Activated T-helper 1 cell treated with anti-CD3 and anti-CD28 coated beads, Interleukin-12 subunit alpha, Interleukin-12 subunit beta, Interleukin-2, Interleukin-4 antibody, amounts not matched to agents 30 ng/mL and 10 ng/mL and 1 ng/mL, durations not matched to agents 14 hours and 24 hours and 36 hours (primary cell): ENCODE measurements at regions of chr1 and their contacts with region 1.

Region 1: DNA sequence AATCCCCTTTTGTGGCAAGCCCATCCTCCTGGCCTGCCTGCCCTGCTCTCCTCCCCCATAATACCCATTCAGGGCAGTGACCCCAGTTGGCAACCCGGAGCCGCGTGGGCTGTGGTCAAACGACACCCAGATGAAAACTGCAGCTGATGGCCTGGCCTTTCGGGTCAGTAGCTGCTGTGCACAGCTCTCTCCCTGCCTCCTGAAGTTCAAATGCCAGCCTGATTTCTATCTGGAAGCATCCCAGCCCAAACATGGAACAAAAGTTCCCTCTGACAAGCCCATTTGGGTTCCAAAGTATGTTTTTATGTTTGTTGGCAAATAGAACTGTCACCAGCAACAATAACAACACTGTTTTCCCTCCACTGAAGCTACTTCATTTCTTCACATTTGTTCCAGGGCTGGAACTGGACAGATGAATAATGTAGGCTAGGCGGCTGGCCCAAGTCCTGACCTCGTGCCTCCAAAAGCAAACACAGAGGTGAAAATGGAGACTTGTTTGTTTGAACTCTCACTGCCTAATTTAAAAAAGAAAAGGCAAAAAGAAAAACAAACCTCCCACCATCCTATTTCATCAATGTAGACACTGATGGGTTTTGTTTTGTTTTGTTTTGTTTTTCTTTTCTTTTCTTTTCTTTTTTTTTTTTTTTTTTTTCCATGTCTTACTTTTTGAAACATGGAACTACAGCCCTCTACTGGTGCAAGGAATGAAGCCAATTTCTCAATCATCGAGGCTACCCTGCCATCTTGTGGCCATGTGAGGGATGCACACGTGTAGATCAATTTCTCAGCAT is 179.0 kb downstream of the ADSS2 start:
- DNase-seq: peak; percentile 52
- H3K4me3 Mint-ChIP-seq: no peak overlapping the region
- H3K27ac Mint-ChIP-seq: no peak overlapping the region
- H3K4me1 Mint-ChIP-seq: peaks cover 8% of the 10 kb centered on the region
- H3K27me3 Mint-ChIP-seq: peaks cover 3% of the 10 kb centered on the region

Region 2: DNA sequence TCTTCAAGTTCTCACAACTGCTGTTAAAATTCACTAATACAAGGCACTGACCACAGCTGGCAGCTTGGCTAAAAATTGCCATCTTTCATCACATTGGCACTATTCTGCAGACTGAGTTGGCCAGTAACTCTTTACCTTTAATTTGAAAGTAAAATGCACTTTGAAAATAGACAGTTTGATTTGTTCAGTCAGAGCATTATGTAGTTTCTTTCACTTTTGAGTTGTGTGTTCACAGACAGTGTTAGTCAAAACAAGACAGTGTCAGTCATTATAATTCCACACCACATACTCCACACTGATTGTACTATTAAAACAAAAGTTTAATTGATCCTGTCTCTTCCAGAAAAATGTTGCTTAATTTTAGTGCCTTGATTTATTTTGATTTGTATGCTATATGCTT is 856.2 kb before region 1 on chr1:
- intact Hi-C with region 1: loop called (anchors 5 kb)
- DNase-seq: no peak
- H3K4me3 Mint-ChIP-seq: peak overlapping the region; percentile 39
- H3K27ac Mint-ChIP-seq: peak overlapping the region; percentile 64
- H3K4me1 Mint-ChIP-seq: peaks cover 66% of the 10 kb centered on the region
- H3K27me3 Mint-ChIP-seq: no peaks in the 10 kb centered on the region

Region 3: GRCh38 chr1:243708210-243708609 is 564.5 kb before region 1 on chr1:
- intact Hi-C with region 1: loop called (anchors 1 kb)
- DNase-seq: no peak
- H3K4me3 Mint-ChIP-seq: no peak overlapping the region
- H3K27ac Mint-ChIP-seq: no peak overlapping the region
- H3K4me1 Mint-ChIP-seq: peaks cover 6% of the 10 kb centered on the region
- H3K27me3 Mint-ChIP-seq: peaks cover 2% of the 10 kb centered on the region

Region 4: DNA sequence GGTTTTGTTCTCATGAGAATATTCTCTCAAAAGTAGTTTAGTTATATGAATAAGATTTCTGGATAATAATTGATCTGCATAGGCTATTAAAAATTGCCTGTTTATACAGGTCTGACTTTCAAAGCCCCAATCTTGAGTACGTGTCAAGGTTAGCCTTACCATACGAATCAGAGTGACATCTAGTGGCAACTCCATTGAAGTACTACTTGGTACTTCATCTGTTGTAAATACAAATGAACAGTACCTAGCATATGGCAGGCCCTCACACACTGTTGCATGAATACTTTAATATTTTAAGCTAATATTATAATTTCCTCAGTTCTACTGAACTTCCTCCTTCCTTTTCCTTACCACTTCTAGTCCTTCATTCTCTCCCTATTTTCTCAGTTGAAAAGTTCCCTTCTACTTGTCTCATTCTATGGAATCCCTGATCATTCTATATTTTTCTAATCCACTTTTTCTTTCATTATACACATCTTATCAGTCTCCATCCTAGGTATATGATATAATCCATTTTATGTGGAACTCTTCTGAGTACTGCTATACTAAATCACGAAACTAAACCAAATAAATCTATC is 523.9 kb before region 1 on chr1:
- intact Hi-C with region 1: loop called (anchors 2 kb)
- DNase-seq: no peak
- H3K4me3 Mint-ChIP-seq: no peak overlapping the region
- H3K27ac Mint-ChIP-seq: no peak overlapping the region
- H3K4me1 Mint-ChIP-seq: no peaks in the 10 kb centered on the region
- H3K27me3 Mint-ChIP-seq: no peaks in the 10 kb centered on the region

Region 5: DNA sequence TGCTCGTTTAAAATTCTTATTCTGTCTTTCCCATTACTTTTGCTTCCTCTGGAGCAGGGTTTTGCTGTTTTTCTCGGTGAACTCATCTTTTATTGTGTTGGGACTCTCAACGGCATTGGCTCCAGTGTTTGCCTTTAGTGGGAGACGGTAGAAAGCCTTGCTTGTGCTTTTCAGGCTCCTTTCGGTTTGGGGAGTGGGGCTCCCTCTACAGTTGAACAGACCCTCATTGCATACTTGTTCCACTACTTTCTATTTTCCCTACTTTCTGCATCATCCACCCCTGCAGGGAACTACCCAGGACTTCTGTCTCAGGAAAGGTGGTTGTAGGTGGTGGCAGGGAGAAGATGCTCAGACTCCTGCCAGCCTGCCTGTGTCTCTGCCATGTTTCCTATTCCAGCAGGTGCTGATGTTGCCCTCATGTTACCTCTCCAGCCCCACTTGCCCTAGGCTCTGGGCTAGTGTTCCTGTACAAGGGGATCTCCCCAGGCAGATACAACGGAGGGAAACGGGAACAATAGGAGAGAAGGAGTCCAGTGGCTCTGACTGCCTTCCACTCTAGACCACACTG is 290.1 kb before region 1 on chr1:
- intact Hi-C with region 1: loop called (anchors 10 kb)
- DNase-seq: no peak
- H3K4me3 Mint-ChIP-seq: no peak overlapping the region
- H3K27ac Mint-ChIP-seq: no peak overlapping the region
- H3K4me1 Mint-ChIP-seq: no peaks in the 10 kb centered on the region
- H3K27me3 Mint-ChIP-seq: no peaks in the 10 kb centered on the region

Region 6: GRCh38 chr1:244302889-244303613 is 30.4 kb after region 1 on chr1:
- intact Hi-C with region 1: loop called (anchors 1 kb)
- DNase-seq: no peak
- H3K4me3 Mint-ChIP-seq: no peak overlapping the region
- H3K27ac Mint-ChIP-seq: no peak overlapping the region
- H3K4me1 Mint-ChIP-seq: peaks cover 12% of the 10 kb centered on the region
- H3K27me3 Mint-ChIP-seq: peaks cover 4% of the 10 kb centered on the region